Activated T-helper 1 cell treated with anti-CD3 and anti-CD28 coated beads, Interleukin-12 subunit alpha, Interleukin-12 subunit beta, Interleukin-2, Interleukin-4 antibody, amounts not matched to agents 30 ng/mL and 10 ng/mL and 1 ng/mL, durations not matched to agents 14 hours and 24 hours and 36 hours (primary cell): ENCODE measurements at regions of chr1 and their contacts with region 1.

Region 1: GRCh38 chr1:193121616-193122593 is at the start of gene CDC73:
- DNase-seq: peak; percentile 97
- H3K4me3 Mint-ChIP-seq: peak within 1 kb of the TSS; percentile 92
- H3K27ac Mint-ChIP-seq: peak within 1 kb of the TSS; percentile 88
- H3K4me1 Mint-ChIP-seq: peaks cover 62% of the 10 kb centered on the region
- H3K27me3 Mint-ChIP-seq: peaks cover 15% of the 10 kb centered on the region
- total RNA-seq, gene CDC73: 56.1 and 57.3 TPM in 2 replicates

Region 2: DNA sequence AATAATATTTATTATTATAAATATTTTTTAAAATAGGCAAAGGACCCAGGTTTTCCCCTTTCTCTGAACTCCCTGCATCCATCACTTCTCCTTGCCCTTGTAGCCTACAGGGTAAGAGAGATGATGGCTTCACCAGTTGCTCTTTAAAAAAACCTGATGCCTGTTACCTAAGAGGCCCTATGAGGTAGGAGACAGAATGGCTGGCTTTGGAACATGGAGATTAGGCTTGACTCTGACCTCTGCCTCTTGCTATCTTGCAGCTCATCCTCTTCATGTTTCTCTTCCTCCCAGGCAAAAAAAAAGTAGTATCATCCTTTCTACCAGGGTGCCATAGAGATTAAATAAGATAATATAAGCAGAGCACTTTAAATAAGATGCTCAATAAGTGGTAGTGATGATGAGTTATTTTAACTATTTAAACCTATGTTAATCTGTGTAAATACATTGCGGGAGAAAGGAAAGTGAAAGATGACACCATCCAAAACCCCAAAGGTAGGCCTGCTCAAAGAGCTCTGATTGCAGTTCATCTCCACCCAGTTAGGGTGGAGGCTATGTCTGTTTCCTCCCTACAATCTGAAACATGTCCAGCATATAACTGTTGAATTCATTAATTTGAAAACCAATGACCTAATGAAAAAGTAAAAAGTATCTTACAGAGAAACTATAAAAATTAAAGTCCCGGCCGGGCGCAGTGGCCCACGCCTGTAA is 261.3 kb before region 1 on chr1:
- intact Hi-C with region 1: no loop called
- DNase-seq: no peak
- H3K4me3 Mint-ChIP-seq: no peak overlapping the region
- H3K27ac Mint-ChIP-seq: no peak overlapping the region
- H3K4me1 Mint-ChIP-seq: peaks cover 6% of the 10 kb centered on the region
- H3K27me3 Mint-ChIP-seq: peaks cover 2% of the 10 kb centered on the region

Region 3: GRCh38 chr1:192983349-192983980 is 138.4 kb before region 1 on chr1:
- intact Hi-C with region 1: loop called (anchors 5 kb)
- DNase-seq: no peak
- H3K4me3 Mint-ChIP-seq: peak overlapping the region; percentile 41
- H3K27ac Mint-ChIP-seq: peak overlapping the region; percentile 88
- H3K4me1 Mint-ChIP-seq: peaks cover 56% of the 10 kb centered on the region
- H3K27me3 Mint-ChIP-seq: no peaks in the 10 kb centered on the region

Region 4: DNA sequence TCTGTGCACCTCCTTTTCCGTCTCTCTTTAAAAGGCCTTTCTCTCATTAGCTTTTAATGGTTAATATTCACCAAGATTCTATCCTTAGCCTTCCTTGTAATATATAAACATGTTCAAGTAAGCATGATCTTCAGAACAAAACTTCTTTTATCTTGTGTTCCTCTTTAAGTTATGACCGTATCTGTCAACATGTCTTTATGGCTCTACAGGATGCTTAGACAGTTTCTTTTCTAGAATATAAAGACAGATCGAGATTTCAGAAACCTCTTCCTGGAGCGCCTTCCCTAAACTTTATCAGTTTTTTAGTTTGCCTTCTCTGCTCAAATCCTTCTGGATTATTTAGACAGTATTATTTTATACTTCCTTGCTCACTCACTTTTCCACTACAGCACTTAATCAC is 55.3 kb before region 1 on chr1:
- intact Hi-C with region 1: no loop called
- DNase-seq: no peak
- H3K4me3 Mint-ChIP-seq: no peak overlapping the region
- H3K27ac Mint-ChIP-seq: peak overlapping the region; percentile 38
- H3K4me1 Mint-ChIP-seq: peaks cover 76% of the 10 kb centered on the region
- H3K27me3 Mint-ChIP-seq: no peaks in the 10 kb centered on the region

Region 5: GRCh38 chr1:193104906-193105820 is 16.7 kb before region 1 on chr1 and contains the start of gene GLRX2:
- intact Hi-C with region 1: loop called (anchors 1 kb)
- DNase-seq: peak; percentile 42
- H3K4me3 Mint-ChIP-seq: peak within 1 kb of the TSS; percentile 92
- H3K27ac Mint-ChIP-seq: peak within 1 kb of the TSS; percentile 77
- H3K4me1 Mint-ChIP-seq: peaks cover 24% of the 10 kb centered on the region
- H3K27me3 Mint-ChIP-seq: peaks cover 14% of the 10 kb centered on the region
- total RNA-seq, gene GLRX2: 29.6 and 32.9 TPM in 2 replicates

Region 6: DNA sequence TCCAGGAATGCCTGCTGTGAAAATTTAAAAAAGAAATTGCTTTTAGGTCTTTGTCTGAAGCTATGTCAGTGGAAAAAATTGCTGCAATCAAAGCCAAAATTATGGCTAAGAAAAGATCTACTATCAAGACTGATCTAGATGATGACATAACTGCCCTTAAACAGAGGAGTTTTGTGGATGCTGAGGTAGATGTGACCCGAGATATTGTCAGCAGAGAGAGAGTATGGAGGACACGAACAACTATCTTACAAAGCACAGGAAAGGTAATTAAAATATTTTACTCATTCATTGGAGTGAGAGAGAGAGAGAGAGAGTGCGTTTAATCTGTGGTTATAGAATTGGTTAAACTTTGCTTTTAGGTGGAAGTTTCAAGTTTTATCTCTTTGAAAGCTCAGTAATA is 19.9 kb after region 1 on chr1:
- intact Hi-C with region 1: loop called (anchors 2 kb)
- DNase-seq: no peak
- H3K4me3 Mint-ChIP-seq: no peak overlapping the region
- H3K27ac Mint-ChIP-seq: no peak overlapping the region
- H3K4me1 Mint-ChIP-seq: peaks cover 25% of the 10 kb centered on the region
- H3K27me3 Mint-ChIP-seq: no peaks in the 10 kb centered on the region

Region 7: DNA sequence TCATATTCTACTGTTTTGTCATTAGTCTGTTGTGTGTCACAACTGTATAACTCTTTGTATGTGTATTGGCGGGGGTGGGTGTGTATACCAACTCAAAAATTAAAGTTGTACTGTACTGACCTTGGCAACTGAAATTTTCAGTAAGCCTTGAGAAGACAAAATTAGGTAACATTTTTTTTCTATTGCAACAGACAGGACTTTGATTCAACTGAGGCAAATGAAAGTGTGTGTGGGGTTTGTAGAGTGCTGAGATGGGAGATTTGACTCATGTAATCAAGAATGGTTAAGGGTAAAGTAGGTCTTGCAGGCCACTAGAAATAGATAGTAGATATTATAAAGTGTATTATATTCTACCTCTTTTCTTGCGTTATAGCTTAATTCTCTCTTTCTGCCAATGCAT is 79.1 kb after region 1 on chr1:
- intact Hi-C with region 1: no loop called
- DNase-seq: no peak
- H3K4me3 Mint-ChIP-seq: no peak overlapping the region
- H3K27ac Mint-ChIP-seq: no peak overlapping the region
- H3K4me1 Mint-ChIP-seq: peaks cover 12% of the 10 kb centered on the region
- H3K27me3 Mint-ChIP-seq: no peaks in the 10 kb centered on the region

Region 8: DNA sequence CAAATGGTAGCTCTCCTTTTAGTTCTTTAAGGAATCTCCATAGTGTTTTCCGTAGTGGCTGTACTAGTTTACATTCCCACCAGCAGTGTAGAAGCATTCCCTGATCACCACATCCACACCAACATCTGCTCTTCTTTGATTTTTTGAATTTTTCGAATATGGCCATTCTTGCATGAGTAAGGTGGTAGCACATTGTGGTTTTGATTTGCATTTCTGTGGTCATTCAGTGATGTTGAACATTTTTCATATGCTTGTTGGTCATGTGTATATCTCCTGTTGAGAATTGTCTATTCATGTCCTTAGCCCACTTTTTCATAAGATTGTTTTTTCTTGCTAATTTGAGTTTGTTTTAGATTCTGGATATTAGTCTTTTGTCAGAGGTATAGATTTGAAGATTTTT is 149.1 kb after region 1 on chr1:
- intact Hi-C with region 1: no loop called
- DNase-seq: no peak
- H3K4me3 Mint-ChIP-seq: no peak overlapping the region
- H3K27ac Mint-ChIP-seq: no peak overlapping the region
- H3K4me1 Mint-ChIP-seq: peaks cover 8% of the 10 kb centered on the region
- H3K27me3 Mint-ChIP-seq: no peaks in the 10 kb centered on the region

Region 9: GRCh38 chr1:193417945-193418744 is 296.2 kb after region 1 on chr1:
- intact Hi-C with region 1: loop called (anchors 5 kb)
- DNase-seq: no peak
- H3K4me3 Mint-ChIP-seq: peak overlapping the region; percentile 36
- H3K27ac Mint-ChIP-seq: peak overlapping the region; percentile 40
- H3K4me1 Mint-ChIP-seq: peaks cover 56% of the 10 kb centered on the region
- H3K27me3 Mint-ChIP-seq: peaks cover 5% of the 10 kb centered on the region